ENCODE measurements at regions of chr17 and their contacts with region 1.

Region 1: GRCh38 chr17:44775136-44775837 is 16.5 kb downstream of the ADAM11 start:
- DNase-seq: peak; percentile 76
- H3K4me3 ChIP-seq: peak overlapping the region; percentile 77
- CTCF ChIP-seq: no peak

Region 2: DNA sequence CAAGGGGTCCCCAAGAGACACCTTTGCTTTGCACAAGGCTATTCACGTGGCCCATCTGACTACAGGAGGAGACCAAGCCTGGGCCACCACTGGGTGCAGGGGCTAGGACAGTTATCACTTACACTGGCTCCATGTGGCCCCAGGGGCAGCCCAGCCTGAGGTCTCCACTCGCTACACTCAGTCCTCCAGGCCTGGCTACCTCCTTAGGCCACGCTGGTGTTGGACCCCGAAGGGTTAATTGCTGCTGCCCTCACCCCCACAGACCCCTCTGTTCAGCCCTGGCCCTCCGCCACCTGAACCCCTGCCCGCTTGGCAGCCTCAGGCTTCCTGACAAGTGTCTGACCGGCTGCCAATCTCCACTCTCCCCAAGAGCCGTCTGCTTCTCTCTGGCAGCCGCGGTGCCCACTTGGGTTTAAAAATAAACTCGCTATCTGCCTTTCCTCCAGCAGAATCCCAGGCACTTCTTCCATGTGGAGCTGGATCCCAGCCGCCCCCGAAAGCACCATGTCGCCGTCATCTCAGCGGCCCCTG is 11.3 kb after region 1 on chr17:
- CTCF ChIA-PET with region 1: interaction called, 18 read pairs
- POLR2A ChIA-PET with region 1: no interaction called
- DNase-seq: no peak
- H3K4me3 ChIP-seq: no peak overlapping the region
- CTCF ChIP-seq: no peak

Region 3: GRCh38 chr17:44807817-44808155 is 32.5 kb after region 1 on chr17:
- CTCF ChIA-PET with region 1: interaction called, 180 read pairs
- POLR2A ChIA-PET with region 1: interaction called, 3 read pairs
- DNase-seq: no peak
- H3K4me3 ChIP-seq: no peak overlapping the region
- CTCF ChIP-seq: no peak

Region 4: GRCh38 chr17:44844390-44844830 is 69.1 kb after region 1 on chr17:
- CTCF ChIA-PET with region 1: interaction called, 89 read pairs
- POLR2A ChIA-PET with region 1: interaction called, 3 read pairs
- DNase-seq: no peak
- H3K4me3 ChIP-seq: no peak overlapping the region
- CTCF ChIP-seq: peak; percentile 9

Region 5: DNA sequence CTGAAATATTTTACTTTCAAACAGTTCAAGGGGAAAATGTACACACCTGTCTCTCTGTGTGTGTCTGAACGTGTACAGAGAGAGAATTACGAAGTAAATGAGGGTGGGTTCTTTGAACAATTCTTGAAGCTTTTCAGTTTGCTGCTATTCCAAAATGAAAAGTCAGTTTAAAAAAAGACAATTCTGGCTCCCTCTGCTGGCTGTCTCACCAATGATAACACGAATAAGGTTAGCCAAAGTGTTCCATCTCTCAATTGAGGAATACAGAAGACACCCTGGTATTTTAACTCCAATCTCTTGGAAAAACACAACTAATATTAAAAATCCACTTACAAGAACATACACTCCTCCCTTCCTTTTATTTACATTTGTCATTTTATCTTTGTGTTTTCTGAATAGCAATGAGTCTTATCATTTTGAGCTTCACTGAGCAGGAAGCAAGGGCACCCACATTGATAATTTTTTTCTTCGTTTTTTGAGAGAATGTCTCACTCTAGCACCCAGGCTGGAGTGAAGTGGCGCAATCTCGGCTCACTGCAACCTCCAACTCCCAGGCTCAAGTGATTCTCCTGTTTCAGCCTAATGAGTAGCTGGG is 103.4 kb after region 1 on chr17:
- CTCF ChIA-PET with region 1: interaction called, 440 read pairs
- POLR2A ChIA-PET with region 1: no interaction called
- DNase-seq: no peak
- H3K4me3 ChIP-seq: no peak overlapping the region
- CTCF ChIP-seq: peak; percentile 53

Region 6: DNA sequence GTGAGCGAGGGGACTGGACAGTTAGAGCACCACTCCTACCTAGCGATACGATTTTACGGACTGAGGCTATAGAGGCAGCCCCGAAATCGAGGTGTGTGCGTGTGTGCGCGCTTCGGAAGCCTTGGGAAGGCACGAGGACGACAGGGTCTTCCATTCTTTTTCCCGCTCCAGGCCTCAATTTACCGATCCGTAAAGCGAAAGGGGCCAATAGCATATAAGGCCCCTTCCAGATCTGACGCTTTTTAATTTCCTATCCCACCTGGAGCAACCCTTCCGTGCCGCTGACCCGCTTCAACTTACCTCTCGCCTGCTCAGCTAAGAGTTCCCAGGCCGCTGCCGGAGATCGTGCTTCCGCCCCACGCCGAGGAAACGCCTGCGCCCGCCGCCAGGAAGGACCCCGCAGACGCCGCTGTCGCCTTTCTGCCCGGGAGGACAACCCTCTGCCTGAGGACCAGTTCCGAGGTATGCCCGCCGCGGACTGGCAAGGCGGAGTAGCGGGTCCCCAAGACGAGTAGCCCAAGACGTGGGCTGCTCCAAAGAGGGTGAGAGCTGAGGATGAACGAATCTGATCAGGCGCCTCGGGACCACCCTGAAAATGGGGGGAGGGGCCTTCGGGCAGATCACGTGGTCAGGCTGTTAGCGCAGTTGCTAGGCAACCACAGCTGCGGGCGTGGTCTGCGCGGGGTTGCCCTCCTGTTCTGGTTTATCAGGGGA is 123.9 kb after region 1 on chr17 and contains the start of gene EFTUD2:
- CTCF ChIA-PET with region 1: interaction called, 21 read pairs
- POLR2A ChIA-PET with region 1: no interaction called
- DNase-seq: no peak
- H3K4me3 ChIP-seq: peak within 1 kb of the TSS; percentile 100
- CTCF ChIP-seq: no peak